Sigmoid colon (tissue), 7 donors: ENCODE measurements at regions of chr5 and their contacts with region 1.

Region 1: DNA sequence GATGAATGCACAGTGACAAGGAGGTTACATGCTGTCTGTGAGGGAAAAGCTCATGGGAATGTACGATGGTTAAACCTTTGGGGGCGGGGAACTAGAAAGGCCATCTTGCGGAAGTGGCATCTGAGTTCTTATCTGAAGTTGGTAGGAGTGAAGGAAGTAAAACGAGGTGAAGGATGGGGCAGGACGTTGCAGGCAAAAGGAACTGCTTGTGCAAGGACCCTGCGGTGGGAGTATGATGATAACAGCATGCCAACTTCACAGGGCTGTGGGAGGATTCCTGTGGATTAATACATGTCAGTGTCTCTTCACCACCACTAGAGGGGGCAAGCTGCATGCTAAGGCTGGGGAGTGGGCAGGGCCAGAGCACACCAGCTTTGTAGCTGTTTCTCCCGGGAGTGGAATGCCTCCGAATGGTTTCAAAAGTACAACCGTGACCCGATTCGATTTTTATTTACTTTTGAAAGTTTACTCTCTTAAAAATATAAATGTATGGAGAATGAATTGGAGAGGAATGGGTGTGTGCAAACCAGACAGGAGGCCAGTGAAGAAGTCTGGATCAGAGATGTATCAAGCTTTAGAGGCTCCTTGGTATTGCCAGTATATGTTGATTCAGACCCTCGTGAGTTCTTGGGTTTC is 62.5 kb downstream of the CYFIP2 start:
- DNase-seq: peak; percentile 84
- H3K4me3 ChIP-seq: peak overlapping the region in 2 of 4 donors; percentile 33 to 35
- H3K27ac ChIP-seq: peak overlapping the region in 2 of 4 donors; percentile 55 to 59
- H3K4me1 ChIP-seq: peaks cover 0 to 11% (median 8%) of the 10 kb centered on the region in 4 donors
- H3K27me3 ChIP-seq: no peaks in the 10 kb centered on the region
- CTCF ChIP-seq: peak; percentile 87 to 90 (median 90)
- EP300 ChIP-seq: no peak
- POLR2A ChIP-seq: no peak

Region 2: GRCh38 chr5:157476702-157477408 is 148.5 kb after region 1 on chr5:
- intact Hi-C with region 1: loop called (anchors 2 kb)
- DNase-seq: peak; percentile 67
- H3K4me3 ChIP-seq: no peak overlapping the region
- H3K27ac ChIP-seq: peak overlapping the region; percentile 38 to 88 (median 84)
- H3K4me1 ChIP-seq: peaks cover 0 to 86% (median 53%) of the 10 kb centered on the region in 4 donors
- H3K27me3 ChIP-seq: no peaks in the 10 kb centered on the region
- CTCF ChIP-seq: peak; percentile 68 to 88 (median 80)
- EP300 ChIP-seq: no peak
- POLR2A ChIP-seq: no peak